ENCODE measurements at regions of chr4 and their contacts with region 1.

Region 1: GRCh38 chr4:173494013-173494970 is 35.7 kb downstream of the HAND2 start:
- DNase-seq: peak; percentile 85
- H3K4me3 ChIP-seq: peak overlapping the region; percentile 73
- H3K27ac ChIP-seq: no peak overlapping the region
- H3K4me1 ChIP-seq: peaks cover 22% of the 10 kb centered on the region
- H3K27me3 ChIP-seq: peaks cover 17% of the 10 kb centered on the region

Region 2: GRCh38 chr4:173319696-173320095 is 174.6 kb before region 1 on chr4:
- in situ Hi-C with region 1: loop called (anchors 10 kb)
- DNase-seq: peak; percentile 65
- H3K4me3 ChIP-seq: no peak overlapping the region
- H3K27ac ChIP-seq: no peak overlapping the region
- H3K4me1 ChIP-seq: peaks cover 19% of the 10 kb centered on the region
- H3K27me3 ChIP-seq: no peaks in the 10 kb centered on the region

Region 3: GRCh38 chr4:173346074-173346473 is 148.2 kb before region 1 on chr4:
- in situ Hi-C with region 1: no loop called
- DNase-seq: peak; percentile 48
- H3K4me3 ChIP-seq: peak overlapping the region; percentile 30; the same call in 1 of the 2 replicates
- H3K27ac ChIP-seq: no peak overlapping the region
- H3K4me1 ChIP-seq: peaks cover 20% of the 10 kb centered on the region
- H3K27me3 ChIP-seq: peaks cover 10% of the 10 kb centered on the region; the same call in 1 of the 2 replicates

Region 4: GRCh38 chr4:173420324-173420752 is 74.0 kb before region 1 on chr4:
- in situ Hi-C with region 1: loop called (anchors 5 kb)
- DNase-seq: peak; percentile 52
- H3K4me3 ChIP-seq: no peak overlapping the region
- H3K27ac ChIP-seq: no peak overlapping the region
- H3K4me1 ChIP-seq: peaks cover 12% of the 10 kb centered on the region
- H3K27me3 ChIP-seq: no peaks in the 10 kb centered on the region